ENCODE measurements at regions of chr2 and their contacts with region 1.

Region 1: GRCh38 chr2:204475399-204475798 is 69.9 kb upstream of the PARD3B start:
- DNase-seq: no peak
- H3K4me3 ChIP-seq: no peak overlapping the region
- H3K27ac ChIP-seq: no peak overlapping the region
- H3K4me1 ChIP-seq: no peaks in the 10 kb centered on the region
- H3K27me3 ChIP-seq: no peaks in the 10 kb centered on the region
- CTCF ChIP-seq: no peak
- POLR2A ChIP-seq: no peak

Region 2: GRCh38 chr2:204545023-204545860 is 69.8 kb after region 1 on chr2 and contains the start of gene PARD3B:
- intact Hi-C with region 1: loop called (anchors 2 kb)
- DNase-seq: peak in 1 of 2 donors; percentile 23
- H3K4me3 ChIP-seq: peak within 1 kb of the TSS; percentile 86 to 95 (median 93)
- H3K27ac ChIP-seq: peak within 1 kb of the TSS; percentile 86
- H3K4me1 ChIP-seq: no peaks in the 10 kb centered on the region
- H3K27me3 ChIP-seq: no peaks in the 10 kb centered on the region
- CTCF ChIP-seq: no peak
- POLR2A ChIP-seq: no peak
- total RNA-seq, gene PARD3B: 24.6 to 66.2 (median 25.9) TPM